ENCODE measurements at regions of chr1 and their contacts with region 1.

Region 1: GRCh38 chr1:91511386-91511785 is 10.7 kb downstream of the CDC7 start:
- DNase-seq: no peak
- ATAC-seq: peak; percentile 59
- H3K4me3 ChIP-seq: no peak overlapping the region
- H3K27ac ChIP-seq: no peak overlapping the region
- H3K4me1 ChIP-seq: no peaks in the 10 kb centered on the region
- H3K27me3 ChIP-seq: no peaks in the 10 kb centered on the region
- CTCF ChIP-seq: peak; percentile 44 to 64 (median 59); a peak in 5 of 6 replicates
- EP300 ChIP-seq: no peak
- POLR2A ChIP-seq: no peak
- RAD21 ChIP-seq: peak; percentile 80

Region 2: GRCh38 chr1:91450260-91450659 is 61.1 kb before region 1 on chr1:
- CTCF ChIA-PET with region 1: no interaction called
- POLR2A ChIA-PET with region 1: no interaction called
- RAD21 ChIA-PET with region 1: no interaction called
- SMC1A ChIA-PET with region 1: no interaction called
- in situ Hi-C with region 1: no loop called
- intact Hi-C with region 1: no loop called
- DNase-seq: no peak
- ATAC-seq: no peak
- H3K4me3 ChIP-seq: no peak overlapping the region
- H3K27ac ChIP-seq: no peak overlapping the region
- H3K4me1 ChIP-seq: no peaks in the 10 kb centered on the region
- H3K27me3 ChIP-seq: no peaks in the 10 kb centered on the region
- CTCF ChIP-seq: no peak
- EP300 ChIP-seq: no peak
- POLR2A ChIP-seq: no peak
- RAD21 ChIP-seq: no peak

Region 3: DNA sequence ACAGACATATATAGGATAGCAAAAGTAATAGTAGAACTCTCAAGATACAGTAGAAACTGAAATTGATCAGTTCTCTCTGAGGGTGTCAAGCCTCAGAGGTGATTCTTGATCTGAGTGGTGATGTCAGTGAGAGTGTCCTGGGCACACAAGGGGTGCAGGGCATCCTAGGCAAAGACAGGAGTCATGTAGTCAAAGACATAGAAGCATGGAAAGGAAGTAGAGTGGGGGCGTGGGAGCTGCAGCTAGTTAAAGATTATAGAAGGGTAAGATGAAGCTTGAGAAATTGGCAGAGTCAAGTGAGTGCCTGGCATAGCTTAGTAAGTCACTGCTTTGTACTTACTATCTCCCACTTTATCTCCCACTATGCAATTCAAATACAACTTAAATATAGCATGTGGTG is 12.1 kb after region 1 on chr1:
- CTCF ChIA-PET with region 1: interaction called, 29 read pairs
- POLR2A ChIA-PET with region 1: no interaction called
- RAD21 ChIA-PET with region 1: interaction called, 16 read pairs
- SMC1A ChIA-PET with region 1: interaction called, 10 read pairs
- in situ Hi-C with region 1: no loop called
- intact Hi-C with region 1: no loop called
- DNase-seq: peak; percentile 47
- ATAC-seq: peak; percentile 98
- H3K4me3 ChIP-seq: no peak overlapping the region
- H3K27ac ChIP-seq: no peak overlapping the region
- H3K4me1 ChIP-seq: peaks cover 5% of the 10 kb centered on the region; the same call in 1 of the 2 replicates
- H3K27me3 ChIP-seq: no peaks in the 10 kb centered on the region
- CTCF ChIP-seq: no peak
- EP300 ChIP-seq: no peak
- POLR2A ChIP-seq: no peak
- RAD21 ChIP-seq: no peak

Region 4: GRCh38 chr1:91569411-91570119 is 58.2 kb after region 1 on chr1:
- CTCF ChIA-PET with region 1: no interaction called
- POLR2A ChIA-PET with region 1: no interaction called
- RAD21 ChIA-PET with region 1: no interaction called
- SMC1A ChIA-PET with region 1: no interaction called
- in situ Hi-C with region 1: no loop called
- intact Hi-C with region 1: no loop called
- DNase-seq: no peak
- ATAC-seq: no peak
- H3K4me3 ChIP-seq: no peak overlapping the region
- H3K27ac ChIP-seq: no peak overlapping the region
- H3K4me1 ChIP-seq: peaks cover 12% of the 10 kb centered on the region
- H3K27me3 ChIP-seq: no peaks in the 10 kb centered on the region
- CTCF ChIP-seq: no peak
- EP300 ChIP-seq: no peak
- POLR2A ChIP-seq: no peak
- RAD21 ChIP-seq: no peak

Region 5: GRCh38 chr1:91885716-91886506 is 374.5 kb after region 1 on chr1 and contains the start of gene TGFBR3:
- CTCF ChIA-PET with region 1: interaction called, 24 read pairs
- POLR2A ChIA-PET with region 1: no interaction called
- RAD21 ChIA-PET with region 1: interaction called, 5 read pairs
- SMC1A ChIA-PET with region 1: interaction called, 12 read pairs
- in situ Hi-C with region 1: loop called (anchors 25 kb)
- intact Hi-C with region 1: no loop called
- DNase-seq: no peak
- ATAC-seq: peak; percentile 87
- H3K4me3 ChIP-seq: peak within 1 kb of the TSS; percentile 85
- H3K27ac ChIP-seq: peak within 1 kb of the TSS; percentile 41
- H3K4me1 ChIP-seq: no peaks in the 10 kb centered on the region; the same call in 1 of the 2 replicates
- H3K27me3 ChIP-seq: peaks cover 0 to 5% of the 10 kb centered on the region in 2 experiments; a peak in 2 of 4 replicates
- CTCF ChIP-seq: peak; percentile 10 to 35 (median 34); a peak in 4 of 6 replicates
- EP300 ChIP-seq: no peak
- POLR2A ChIP-seq: peak; percentile 75
- RAD21 ChIP-seq: 0 out of 2 replicates have a peak, but pooled peaks have one; percentile 24
- polyA plus RNA-seq, gene TGFBR3: 2.7 to 3.1 TPM

Region 6: DNA sequence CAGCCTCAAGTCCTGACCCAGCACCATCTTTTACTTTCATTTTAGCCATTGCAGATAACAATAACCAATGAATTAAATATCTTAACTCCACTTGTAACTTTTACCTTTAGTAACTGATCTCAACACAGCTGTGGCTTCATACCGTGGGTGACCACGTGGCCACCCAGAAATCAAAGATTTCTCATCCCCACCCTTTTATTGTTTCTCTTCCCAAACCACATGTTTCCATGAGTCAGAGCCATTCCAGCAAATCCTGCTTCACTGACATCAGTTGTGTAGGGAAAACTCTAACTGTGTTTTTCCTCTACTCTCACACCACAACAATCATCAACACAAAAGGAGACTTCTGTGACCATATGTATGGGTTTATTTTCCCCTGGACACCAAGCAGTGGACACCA is 412.8 kb after region 1 on chr1:
- CTCF ChIA-PET with region 1: interaction called, 55 read pairs
- POLR2A ChIA-PET with region 1: no interaction called
- RAD21 ChIA-PET with region 1: interaction called, 3 read pairs
- SMC1A ChIA-PET with region 1: interaction called, 19 read pairs
- in situ Hi-C with region 1: loop called (anchors 5 kb)
- intact Hi-C with region 1: loop called (anchors 1 kb)
- DNase-seq: no peak
- ATAC-seq: no peak
- H3K4me3 ChIP-seq: no peak overlapping the region
- H3K27ac ChIP-seq: no peak overlapping the region
- H3K4me1 ChIP-seq: no peaks in the 10 kb centered on the region
- H3K27me3 ChIP-seq: no peaks in the 10 kb centered on the region
- CTCF ChIP-seq: no peak
- EP300 ChIP-seq: no peak
- POLR2A ChIP-seq: no peak
- RAD21 ChIP-seq: no peak

Region 7: DNA sequence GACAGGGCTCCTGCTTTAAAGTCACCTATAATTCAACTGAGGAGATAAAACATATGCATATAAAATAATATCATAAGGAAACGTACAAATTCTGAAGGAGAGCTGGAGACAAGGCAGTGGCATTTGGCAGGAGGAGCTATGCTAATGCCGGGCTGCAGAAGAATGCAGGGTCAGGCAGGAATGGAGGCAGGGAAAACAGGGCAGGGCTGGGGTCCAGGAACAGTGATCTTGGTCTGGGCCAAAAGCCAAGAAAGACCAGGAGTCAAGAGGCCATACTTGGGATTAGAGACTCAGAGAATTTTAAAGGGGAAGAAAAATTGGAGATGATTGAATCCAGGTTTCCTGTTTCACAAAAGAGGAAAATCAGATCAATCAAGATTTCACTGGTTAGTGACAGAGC is 417.9 kb after region 1 on chr1:
- CTCF ChIA-PET with region 1: interaction called, 55 read pairs
- POLR2A ChIA-PET with region 1: no interaction called
- RAD21 ChIA-PET with region 1: interaction called, 3 read pairs
- SMC1A ChIA-PET with region 1: interaction called, 19 read pairs
- in situ Hi-C with region 1: loop called (anchors 5 kb)
- intact Hi-C with region 1: loop called (anchors 1 kb)
- DNase-seq: no peak
- ATAC-seq: no peak
- H3K4me3 ChIP-seq: no peak overlapping the region
- H3K27ac ChIP-seq: no peak overlapping the region
- H3K4me1 ChIP-seq: no peaks in the 10 kb centered on the region
- H3K27me3 ChIP-seq: no peaks in the 10 kb centered on the region
- CTCF ChIP-seq: no peak
- EP300 ChIP-seq: no peak
- POLR2A ChIP-seq: no peak
- RAD21 ChIP-seq: no peak